ENCODE measurements at regions of chr3 and their contacts with region 1.

Region 1: DNA sequence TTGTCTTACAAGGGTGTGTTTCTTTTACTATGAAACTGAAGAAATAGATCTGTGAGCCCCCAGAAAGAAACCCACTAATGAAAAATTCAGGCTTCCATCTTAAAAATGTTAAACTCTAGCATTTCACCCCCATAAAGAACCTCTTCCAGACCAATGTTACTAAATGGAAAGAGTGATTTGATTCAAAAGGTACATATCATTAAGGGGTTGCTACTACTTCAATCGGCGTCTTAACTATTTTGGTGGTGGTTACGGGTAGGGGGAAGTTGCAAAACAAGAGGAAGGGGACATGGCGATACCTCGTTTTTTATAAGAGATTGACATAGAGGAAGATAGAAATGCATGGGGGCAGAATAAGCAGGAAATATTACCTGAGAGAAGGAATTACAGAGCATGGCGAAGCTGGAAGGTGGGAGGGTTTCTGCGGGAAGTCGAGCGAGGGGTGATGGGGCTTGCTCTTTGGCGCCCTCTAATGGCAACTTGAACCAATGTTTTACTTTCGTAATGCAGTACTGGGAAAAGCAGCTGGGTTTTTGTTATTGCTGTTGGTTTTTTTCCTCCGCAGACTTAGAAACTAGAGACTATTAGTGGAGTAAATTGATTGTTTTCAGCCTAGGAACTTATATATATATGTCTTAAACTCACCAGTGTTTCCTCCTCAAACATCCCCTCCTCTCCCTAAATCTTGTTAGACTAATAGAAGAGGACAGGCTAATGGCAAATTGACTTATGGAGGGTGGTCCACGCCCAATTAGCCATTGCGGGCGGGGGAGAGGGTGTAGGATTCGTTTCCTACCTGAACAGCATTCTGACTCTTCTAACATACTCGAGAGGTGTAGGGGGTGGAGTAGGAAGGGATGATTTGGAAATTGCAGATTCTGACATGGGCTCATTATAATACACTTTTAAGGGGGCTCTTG is 11.3 kb upstream of the SOX2 start:
- DNase-seq: peak in 1 of 2 donors; percentile 28
- ATAC-seq: peak; percentile 60 to 88
- H3K4me3 ChIP-seq: peak overlapping the region; percentile 0 to 45 (median 14)
- H3K27ac ChIP-seq: no peak overlapping the region
- H3K4me1 ChIP-seq: peaks cover 12 to 17% of the 10 kb centered on the region in 2 donors
- H3K27me3 ChIP-seq: peaks cover 98 to 100% (median 100%) of the 10 kb centered on the region in 3 donors
- CTCF ChIP-seq: peak; percentile 35 to 87 (median 77)
- POLR2A ChIP-seq: no peak

Region 2: DNA sequence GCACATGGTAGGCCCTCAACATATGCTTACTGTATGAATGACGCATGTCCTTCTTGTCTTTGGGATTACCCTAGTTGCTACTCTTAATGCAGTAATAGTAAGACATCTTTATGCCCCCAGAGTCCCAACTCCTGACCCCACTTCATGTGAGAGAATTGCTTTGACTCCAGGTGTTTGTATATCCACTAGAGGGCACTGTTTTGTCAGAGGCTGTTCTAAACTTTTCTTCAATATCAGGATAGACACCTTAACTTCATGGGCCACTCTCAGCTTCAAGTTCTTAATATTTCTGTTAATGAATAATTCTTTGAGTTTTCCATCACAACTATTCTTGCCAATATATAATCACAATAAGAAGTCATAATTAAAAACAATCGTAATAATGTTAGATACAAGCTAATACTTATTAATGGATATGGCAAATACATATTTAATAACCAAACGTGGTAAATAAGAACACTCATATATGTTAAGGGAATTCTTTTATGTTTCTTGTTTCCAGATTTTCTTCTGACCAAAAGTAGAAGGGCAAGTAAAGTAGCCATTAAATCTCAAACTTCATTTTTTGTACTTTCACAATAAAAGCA is 373.7 kb before region 1 on chr3:
- in situ Hi-C with region 1: no loop called
- intact Hi-C with region 1: loop called (anchors 5 kb)
- DNase-seq: no peak
- ATAC-seq: no peak
- H3K4me3 ChIP-seq: no peak overlapping the region
- H3K27ac ChIP-seq: no peak overlapping the region
- H3K4me1 ChIP-seq: no peaks in the 10 kb centered on the region
- H3K27me3 ChIP-seq: peaks cover 0 to 2% (median 0%) of the 10 kb centered on the region in 3 donors
- CTCF ChIP-seq: peak in 4 of 5 experiments; percentile 13 to 64 (median 33)
- POLR2A ChIP-seq: no peak

Region 3: GRCh38 chr3:182258538-182259177 is 558.2 kb after region 1 on chr3:
- in situ Hi-C with region 1: loop called in 2 of 4 experiments (anchors 10 to 25 kb)
- intact Hi-C with region 1: no loop called
- DNase-seq: no peak
- ATAC-seq: no peak
- H3K4me3 ChIP-seq: no peak overlapping the region
- H3K27ac ChIP-seq: no peak overlapping the region
- H3K4me1 ChIP-seq: no peaks in the 10 kb centered on the region
- H3K27me3 ChIP-seq: peaks cover 0 to 4% (median 4%) of the 10 kb centered on the region in 3 donors
- CTCF ChIP-seq: peak in 1 of 5 experiments; percentile 29
- POLR2A ChIP-seq: no peak

Region 4: DNA sequence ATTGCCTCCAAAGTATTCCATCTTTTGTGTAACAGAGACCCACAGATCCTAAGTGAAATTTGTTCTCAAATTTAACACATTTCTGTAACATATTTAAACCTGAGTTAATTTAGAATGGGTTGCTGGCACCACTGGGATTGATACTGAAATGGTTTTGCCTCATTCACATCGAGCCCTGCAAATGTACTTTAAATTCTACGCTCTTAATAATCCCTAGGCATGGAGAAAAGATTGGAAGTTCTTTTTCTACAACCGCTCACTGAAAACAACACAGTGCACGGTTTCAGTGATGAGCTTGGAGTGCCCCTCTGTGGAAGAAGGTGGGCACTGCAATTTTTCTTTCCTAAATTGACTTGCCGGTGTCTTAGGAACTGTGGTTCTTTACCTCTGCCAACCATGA is 983.0 kb after region 1 on chr3:
- in situ Hi-C with region 1: loop called (anchors 10 kb)
- intact Hi-C with region 1: no loop called
- DNase-seq: peak in 1 of 2 donors; percentile 40
- ATAC-seq: peak; percentile 92 to 93
- H3K4me3 ChIP-seq: peak overlapping the region; percentile 55 to 73 (median 60)
- H3K27ac ChIP-seq: no peak overlapping the region
- H3K4me1 ChIP-seq: peaks cover 0 to 4% of the 10 kb centered on the region in 2 donors
- H3K27me3 ChIP-seq: peaks cover 0 to 5% (median 5%) of the 10 kb centered on the region in 3 donors
- CTCF ChIP-seq: peak; percentile 52 to 87 (median 74)
- POLR2A ChIP-seq: no peak